ENCODE measurements at regions of chrX and their contacts with region 1.

Region 1: DNA sequence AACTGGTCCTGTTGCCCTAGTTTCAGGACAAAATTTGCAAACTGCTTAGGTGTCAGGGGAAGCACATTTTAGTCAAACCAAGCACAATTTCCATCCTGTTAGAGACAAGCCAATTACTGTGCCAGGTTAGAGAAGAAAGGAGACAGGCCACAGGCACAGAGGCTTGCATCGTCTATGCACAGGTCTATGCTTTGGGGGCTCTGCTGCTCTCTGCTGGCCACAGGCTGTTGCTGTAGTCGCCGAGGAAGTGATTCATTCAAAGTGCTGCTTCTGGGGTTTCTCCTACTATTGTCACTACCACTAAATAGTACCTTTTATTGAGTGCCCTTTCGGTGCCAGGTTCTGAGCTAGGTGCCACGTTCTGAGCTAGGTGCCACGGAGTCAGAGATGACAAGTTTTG is 45.5 kb downstream of the VGLL1 start:
- DNase-seq: peak; percentile 77
- H3K4me3 ChIP-seq: no peak overlapping the region
- H3K27ac ChIP-seq: no peak overlapping the region
- H3K4me1 ChIP-seq: no peaks in the 10 kb centered on the region
- H3K27me3 ChIP-seq: no peaks in the 10 kb centered on the region
- CTCF ChIP-seq: peak in 3 of 4 experiments; percentile 36 to 57 (median 38)
- EP300 ChIP-seq: no peak
- POLR2A ChIP-seq: no peak

Region 2: DNA sequence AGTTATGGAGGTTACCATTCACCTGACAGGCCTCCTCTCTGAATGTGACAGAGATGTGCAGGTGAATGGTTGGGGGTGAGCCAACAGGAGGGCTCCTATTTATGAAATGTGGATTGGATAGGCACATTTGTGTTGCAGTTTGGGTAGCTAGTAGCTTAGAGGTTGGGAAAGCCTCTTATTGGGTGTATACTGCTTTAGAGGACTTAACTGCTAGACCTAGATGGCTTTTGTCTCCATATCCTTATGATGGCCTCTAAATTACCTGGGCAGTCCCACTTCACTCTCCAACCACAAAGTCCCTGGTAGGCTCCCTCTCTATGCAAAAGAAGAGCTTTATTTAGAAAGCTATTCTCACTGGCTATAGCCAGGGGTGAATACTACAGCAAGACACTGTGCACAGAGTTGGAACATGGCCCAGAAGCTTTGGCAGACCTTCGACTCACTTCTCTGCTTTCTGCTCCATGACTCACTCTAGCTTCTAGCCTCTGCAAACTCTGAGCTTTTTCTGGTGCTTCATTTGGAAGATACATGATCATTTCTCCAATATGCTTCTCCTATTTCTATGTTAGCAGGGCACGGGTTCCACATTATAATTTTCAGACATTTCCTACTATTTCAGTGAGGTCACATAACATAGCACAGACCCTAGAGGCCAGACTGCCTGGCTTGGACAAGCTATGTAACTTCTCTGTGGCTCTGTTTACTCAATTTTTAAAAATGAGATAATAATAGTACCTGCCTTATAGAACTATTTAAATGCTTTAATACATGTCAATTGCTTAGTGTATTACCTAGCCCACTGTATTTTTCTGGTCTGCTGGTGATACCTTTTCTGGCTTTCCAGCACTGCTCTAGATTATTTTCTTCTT is 51.6 kb before region 1 on chrX:
- intact Hi-C with region 1: loop called (anchors 10 kb)
- DNase-seq: peak; percentile 95
- H3K4me3 ChIP-seq: no peak overlapping the region
- H3K27ac ChIP-seq: peak overlapping the region; percentile 55 to 70 (median 67)
- H3K4me1 ChIP-seq: peaks cover 0 to 19% (median 11%) of the 10 kb centered on the region in 4 donors
- H3K27me3 ChIP-seq: no peaks in the 10 kb centered on the region
- CTCF ChIP-seq: no peak
- EP300 ChIP-seq: no peak
- POLR2A ChIP-seq: no peak

Measured in sigmoid colon (tissue), 7 donors.